Activated CD4-positive, alpha-beta T cell treated with anti-CD3 and anti-CD28 coated beads for 36 hours (primary cell): ENCODE measurements at regions of chr5 and their contacts with region 1.

Region 1: GRCh38 chr5:87267574-87268125 is at the start of gene RASA1:
- DNase-seq: peak; percentile 93
- ATAC-seq: peak; percentile 79
- H3K4me3 Mint-ChIP-seq: peak within 1 kb of the TSS; percentile 100
- H3K27ac Mint-ChIP-seq: peak within 1 kb of the TSS; percentile 98
- H3K4me1 Mint-ChIP-seq: peaks cover 34% of the 10 kb centered on the region
- H3K27me3 Mint-ChIP-seq: no peaks in the 10 kb centered on the region
- total RNA-seq, gene RASA1: 22.6 to 22.9 TPM

Region 2: GRCh38 chr5:86617756-86618576 is 649.7 kb before region 1 on chr5 and contains the start of gene COX7C:
- CTCF ChIA-PET with region 1: no interaction called
- POLR2A ChIA-PET with region 1: no interaction called
- intact Hi-C with region 1: loop called (anchors 5 kb)
- DNase-seq: peak; percentile 94
- ATAC-seq: peak; percentile 99
- H3K4me3 Mint-ChIP-seq: peak within 1 kb of the TSS; percentile 100
- H3K27ac Mint-ChIP-seq: peak within 1 kb of the TSS; percentile 100
- H3K4me1 Mint-ChIP-seq: peaks cover 23% of the 10 kb centered on the region
- H3K27me3 Mint-ChIP-seq: peaks cover 6% of the 10 kb centered on the region
- total RNA-seq, gene COX7C: 438 to 701 TPM

Region 3: DNA sequence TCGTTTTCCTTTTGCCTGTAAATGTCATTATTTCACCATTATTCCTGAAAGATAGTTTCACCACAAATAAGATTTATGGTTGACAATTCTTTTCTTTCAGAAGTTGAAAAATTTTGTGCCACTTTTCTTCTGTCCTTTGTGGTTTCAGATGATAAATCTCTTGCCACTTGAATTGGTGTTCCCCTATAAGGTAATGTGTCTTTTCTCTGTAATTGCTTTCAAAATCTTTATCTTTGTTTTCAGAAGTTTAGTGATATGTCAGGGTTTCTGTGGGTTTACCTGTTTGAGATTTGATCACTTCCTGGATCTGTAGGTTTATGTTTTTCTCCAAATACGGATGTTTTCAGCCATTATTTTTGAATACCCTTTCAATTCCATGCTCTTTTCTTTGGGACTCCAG is 14.6 kb after region 1 on chr5:
- CTCF ChIA-PET with region 1: interaction called, 6 read pairs
- POLR2A ChIA-PET with region 1: interaction called, 4 read pairs
- intact Hi-C with region 1: loop called (anchors 1 to 2 kb)
- DNase-seq: no peak
- ATAC-seq: peak; percentile 85
- H3K4me3 Mint-ChIP-seq: peak overlapping the region; percentile 54
- H3K27ac Mint-ChIP-seq: peak overlapping the region; percentile 79
- H3K4me1 Mint-ChIP-seq: peaks cover 47% of the 10 kb centered on the region
- H3K27me3 Mint-ChIP-seq: no peaks in the 10 kb centered on the region

Region 4: DNA sequence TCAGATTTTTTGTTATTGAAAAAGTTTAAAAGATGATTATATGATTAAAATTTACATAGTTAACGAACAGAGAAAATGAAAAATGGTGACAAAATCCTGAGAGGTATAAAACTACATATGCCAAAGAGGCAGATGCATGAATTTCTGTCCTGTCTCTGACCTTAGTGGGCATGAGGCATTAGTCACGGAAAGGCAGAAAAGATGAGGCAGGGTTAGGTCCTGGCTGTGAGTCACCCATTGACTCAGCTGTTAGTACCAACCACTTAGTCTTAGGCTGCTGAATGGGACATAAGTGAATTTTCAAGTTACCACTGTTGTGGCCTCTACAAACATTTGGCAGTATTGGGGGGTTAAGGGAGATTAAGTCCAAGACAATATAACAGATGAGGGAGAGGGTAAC is 33.1 kb after region 1 on chr5:
- CTCF ChIA-PET with region 1: interaction called, 3 read pairs
- POLR2A ChIA-PET with region 1: no interaction called
- intact Hi-C with region 1: loop called (anchors 2 to 5 kb)
- DNase-seq: peak; percentile 73
- ATAC-seq: peak; percentile 99
- H3K4me3 Mint-ChIP-seq: no peak overlapping the region
- H3K27ac Mint-ChIP-seq: no peak overlapping the region
- H3K4me1 Mint-ChIP-seq: peaks cover 66% of the 10 kb centered on the region
- H3K27me3 Mint-ChIP-seq: no peaks in the 10 kb centered on the region

Region 5: GRCh38 chr5:87340716-87341115 is 73.1 kb after region 1 on chr5:
- CTCF ChIA-PET with region 1: no interaction called
- POLR2A ChIA-PET with region 1: no interaction called
- intact Hi-C with region 1: loop called (anchors 2 to 5 kb)
- DNase-seq: no peak
- ATAC-seq: peak; percentile 97
- H3K4me3 Mint-ChIP-seq: peak overlapping the region; percentile 49
- H3K27ac Mint-ChIP-seq: peak overlapping the region; percentile 91
- H3K4me1 Mint-ChIP-seq: peaks cover 20% of the 10 kb centered on the region
- H3K27me3 Mint-ChIP-seq: no peaks in the 10 kb centered on the region

Region 6: DNA sequence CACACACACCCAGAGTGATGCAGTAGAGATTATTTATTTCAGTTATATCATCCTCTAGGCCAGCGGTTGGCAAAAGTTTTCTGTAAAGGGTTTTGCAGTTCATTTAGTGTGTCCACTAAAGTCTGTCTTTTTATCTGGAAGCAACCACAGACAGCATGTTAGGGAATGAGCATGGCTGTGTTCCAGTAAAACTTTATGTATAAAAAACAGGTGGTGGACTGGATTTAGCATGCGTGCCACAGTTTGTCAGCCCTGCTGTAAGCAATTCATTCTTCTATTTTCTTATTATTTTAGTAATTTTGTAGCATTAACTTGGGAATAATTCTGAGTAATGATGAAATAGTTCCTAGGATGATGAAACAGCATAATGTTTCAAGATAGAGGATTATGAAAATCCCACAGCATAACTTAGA is 93.4 kb after region 1 on chr5:
- CTCF ChIA-PET with region 1: no interaction called
- POLR2A ChIA-PET with region 1: no interaction called
- intact Hi-C with region 1: no loop called
- DNase-seq: no peak
- ATAC-seq: no peak
- H3K4me3 Mint-ChIP-seq: no peak overlapping the region
- H3K27ac Mint-ChIP-seq: no peak overlapping the region
- H3K4me1 Mint-ChIP-seq: peaks cover 16% of the 10 kb centered on the region
- H3K27me3 Mint-ChIP-seq: no peaks in the 10 kb centered on the region